ENCODE measurements at regions of chr13 and their contacts with region 1.

Region 1: DNA sequence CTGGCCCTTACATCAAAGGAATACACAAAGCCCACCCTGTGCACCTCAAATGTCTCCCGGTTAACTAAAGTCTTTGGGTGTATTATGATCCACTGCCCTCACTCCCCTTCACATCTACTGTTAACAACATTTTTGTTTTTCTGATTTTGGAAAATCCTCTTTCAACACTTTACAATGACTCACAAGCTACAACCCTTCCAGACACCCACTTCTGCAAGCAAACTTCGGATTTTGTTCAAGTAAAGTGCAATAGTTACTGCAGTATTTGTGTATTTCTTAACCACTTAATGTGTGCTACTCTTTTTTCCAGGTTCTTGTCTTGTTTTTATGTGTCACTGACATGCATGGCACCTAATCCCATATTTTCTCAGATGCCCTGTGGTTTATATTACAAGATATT is 101.1 kb downstream of the EDNRB start:
- DNase-seq: no peak
- ATAC-seq: no peak
- H3K4me3 ChIP-seq: no peak overlapping the region
- H3K27ac ChIP-seq: no peak overlapping the region
- H3K4me1 ChIP-seq: peaks cover 5% of the 10 kb centered on the region; the same call in 1 of the 2 replicates
- H3K27me3 ChIP-seq: no peaks in the 10 kb centered on the region
- CTCF ChIP-seq: no peak

Region 2: DNA sequence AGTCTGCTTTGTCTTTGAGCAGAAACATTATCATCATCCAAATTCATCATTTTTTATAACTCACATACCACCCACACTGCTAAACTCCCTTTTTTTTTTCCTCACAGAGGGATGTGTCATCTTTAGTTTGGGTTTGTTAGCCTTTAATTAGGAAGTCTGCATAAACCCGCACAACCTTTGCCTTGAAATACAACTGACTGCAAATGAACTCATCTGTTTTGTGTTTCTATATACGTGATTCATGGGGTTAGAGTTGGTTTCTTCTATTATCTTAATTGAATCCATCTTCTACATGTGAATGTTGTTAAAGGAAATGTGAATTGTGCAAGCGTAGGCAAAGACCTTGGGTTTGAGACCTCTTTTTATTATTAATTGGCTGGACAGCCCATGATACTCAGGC is 17.3 kb before region 1 on chr13:
- CTCF ChIA-PET with region 1: no interaction called
- POLR2A ChIA-PET with region 1: no interaction called
- intact Hi-C with region 1: no loop called
- DNase-seq: no peak
- ATAC-seq: no peak
- H3K4me3 ChIP-seq: no peak overlapping the region
- H3K27ac ChIP-seq: no peak overlapping the region
- H3K4me1 ChIP-seq: no peaks in the 10 kb centered on the region
- H3K27me3 ChIP-seq: peaks cover 8% of the 10 kb centered on the region; the same call in 1 of the 2 replicates
- CTCF ChIP-seq: no peak

Region 3: DNA sequence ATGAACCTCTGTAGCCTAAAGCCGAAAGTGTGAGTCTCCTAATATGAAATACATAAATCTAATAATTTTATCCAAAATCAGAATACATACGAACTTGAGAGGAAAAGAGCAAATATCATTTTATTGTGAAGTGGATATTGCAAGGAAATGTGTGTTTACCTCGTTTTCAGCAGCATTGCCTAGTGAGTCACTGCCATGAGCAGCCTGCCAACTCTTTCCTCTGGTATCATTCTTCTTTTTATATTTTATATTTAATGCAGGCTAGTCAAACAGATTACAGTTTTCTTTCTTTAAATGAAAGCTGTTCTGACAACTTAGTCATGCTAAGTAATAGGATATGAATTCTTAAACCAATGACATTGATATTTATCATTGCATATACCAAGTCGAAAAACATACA is 56.9 kb after region 1 on chr13:
- CTCF ChIA-PET with region 1: no interaction called
- POLR2A ChIA-PET with region 1: no interaction called
- intact Hi-C with region 1: loop called (anchors 5 kb)
- DNase-seq: peak; percentile 59
- ATAC-seq: peak; percentile 69
- H3K4me3 ChIP-seq: no peak overlapping the region
- H3K27ac ChIP-seq: peak overlapping the region; percentile 73
- H3K4me1 ChIP-seq: peaks cover 16% of the 10 kb centered on the region
- H3K27me3 ChIP-seq: no peaks in the 10 kb centered on the region
- CTCF ChIP-seq: no peak

Region 4: DNA sequence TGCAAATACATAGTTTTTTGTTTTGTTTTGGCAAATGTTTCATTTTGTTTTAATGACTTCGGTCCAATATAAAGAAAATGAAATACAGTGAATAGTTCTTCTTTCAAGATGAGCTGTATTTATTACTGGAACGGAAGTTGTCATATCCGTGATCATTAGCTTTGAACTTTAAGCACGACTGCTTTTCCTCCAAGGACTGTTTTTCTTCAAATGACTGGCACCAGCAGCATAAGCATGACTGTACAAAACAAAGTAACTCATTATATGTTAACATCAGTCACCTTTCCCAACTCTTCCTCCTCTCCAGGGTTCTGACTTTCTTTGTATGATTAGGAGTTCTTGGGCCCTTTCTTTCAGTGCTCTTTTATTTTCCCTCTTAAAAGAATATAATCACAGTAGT is 80.6 kb after region 1 on chr13:
- CTCF ChIA-PET with region 1: no interaction called
- POLR2A ChIA-PET with region 1: no interaction called
- intact Hi-C with region 1: no loop called
- DNase-seq: peak; percentile 33
- ATAC-seq: peak; percentile 71
- H3K4me3 ChIP-seq: no peak overlapping the region
- H3K27ac ChIP-seq: peak overlapping the region; percentile 79
- H3K4me1 ChIP-seq: peaks cover 14% of the 10 kb centered on the region; the same call in 1 of the 2 replicates
- H3K27me3 ChIP-seq: no peaks in the 10 kb centered on the region
- CTCF ChIP-seq: no peak

Region 5: DNA sequence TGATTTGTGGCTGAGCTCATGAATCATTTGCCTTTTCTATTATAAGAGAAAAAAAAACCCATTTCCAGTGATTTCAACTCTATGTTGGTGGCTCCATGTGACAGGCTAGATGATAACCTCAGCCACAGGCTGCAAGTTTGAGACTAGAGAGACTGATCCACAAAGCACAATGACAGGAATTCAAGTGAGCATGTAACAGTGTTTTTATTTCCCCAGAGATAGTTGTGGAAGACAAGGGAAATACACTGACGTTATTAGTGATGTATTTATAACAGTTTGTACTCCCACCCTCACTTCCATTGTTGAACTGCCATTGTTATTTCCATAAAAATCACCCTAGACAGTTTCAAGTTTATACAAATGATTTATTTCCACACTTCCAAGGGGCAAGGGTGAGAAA is 129.0 kb after region 1 on chr13:
- CTCF ChIA-PET with region 1: no interaction called
- POLR2A ChIA-PET with region 1: no interaction called
- intact Hi-C with region 1: no loop called
- DNase-seq: no peak
- ATAC-seq: no peak
- H3K4me3 ChIP-seq: no peak overlapping the region
- H3K27ac ChIP-seq: no peak overlapping the region
- H3K4me1 ChIP-seq: no peaks in the 10 kb centered on the region
- H3K27me3 ChIP-seq: no peaks in the 10 kb centered on the region
- CTCF ChIP-seq: no peak